CD4-positive, alpha-beta T cell (primary cell): ENCODE measurements at regions of chr9 and their contacts with region 1.

Region 1: GRCh38 chr9:100598641-100599145 is 20.8 kb downstream of the CAVIN4 start:
- DNase-seq: peak; percentile 66 to 91 (median 76)
- ATAC-seq: peak; percentile 84
- H3K4me3 ChIP-seq: peak overlapping the region; percentile 62
- H3K4me3 Mint-ChIP-seq: peak overlapping the region; percentile 81
- H3K27ac ChIP-seq: peak overlapping the region in 1 of 2 donors; percentile 45
- H3K27ac Mint-ChIP-seq: peak overlapping the region; percentile 63
- H3K4me1 ChIP-seq: peaks cover 18% of the 10 kb centered on the region
- H3K4me1 Mint-ChIP-seq: peaks cover 33% of the 10 kb centered on the region
- H3K27me3 ChIP-seq: no peaks in the 10 kb centered on the region
- H3K27me3 Mint-ChIP-seq: no peaks in the 10 kb centered on the region
- CTCF ChIP-seq: no peak

Region 2: GRCh38 chr9:98974994-98975712 is 1623.5 kb before region 1 on chr9:
- CTCF ChIA-PET with region 1: no interaction called
- POLR2A ChIA-PET with region 1: no interaction called
- intact Hi-C with region 1: loop called in 1 of 2 experiments (anchors 10 kb)
- DNase-seq: peak; percentile 58 to 87 (median 74)
- ATAC-seq: peak; percentile 99
- H3K4me3 ChIP-seq: peak overlapping the region; percentile 25
- H3K4me3 Mint-ChIP-seq: peak overlapping the region; percentile 28
- H3K27ac ChIP-seq: no peak overlapping the region
- H3K27ac Mint-ChIP-seq: no peak overlapping the region
- H3K4me1 ChIP-seq: peaks cover 9% of the 10 kb centered on the region
- H3K4me1 Mint-ChIP-seq: no peaks in the 10 kb centered on the region
- H3K27me3 ChIP-seq: peaks cover 0 to 6% of the 10 kb centered on the region in 2 experiments
- H3K27me3 Mint-ChIP-seq: peaks cover 10% of the 10 kb centered on the region
- CTCF ChIP-seq: peak; percentile 97

Region 3: DNA sequence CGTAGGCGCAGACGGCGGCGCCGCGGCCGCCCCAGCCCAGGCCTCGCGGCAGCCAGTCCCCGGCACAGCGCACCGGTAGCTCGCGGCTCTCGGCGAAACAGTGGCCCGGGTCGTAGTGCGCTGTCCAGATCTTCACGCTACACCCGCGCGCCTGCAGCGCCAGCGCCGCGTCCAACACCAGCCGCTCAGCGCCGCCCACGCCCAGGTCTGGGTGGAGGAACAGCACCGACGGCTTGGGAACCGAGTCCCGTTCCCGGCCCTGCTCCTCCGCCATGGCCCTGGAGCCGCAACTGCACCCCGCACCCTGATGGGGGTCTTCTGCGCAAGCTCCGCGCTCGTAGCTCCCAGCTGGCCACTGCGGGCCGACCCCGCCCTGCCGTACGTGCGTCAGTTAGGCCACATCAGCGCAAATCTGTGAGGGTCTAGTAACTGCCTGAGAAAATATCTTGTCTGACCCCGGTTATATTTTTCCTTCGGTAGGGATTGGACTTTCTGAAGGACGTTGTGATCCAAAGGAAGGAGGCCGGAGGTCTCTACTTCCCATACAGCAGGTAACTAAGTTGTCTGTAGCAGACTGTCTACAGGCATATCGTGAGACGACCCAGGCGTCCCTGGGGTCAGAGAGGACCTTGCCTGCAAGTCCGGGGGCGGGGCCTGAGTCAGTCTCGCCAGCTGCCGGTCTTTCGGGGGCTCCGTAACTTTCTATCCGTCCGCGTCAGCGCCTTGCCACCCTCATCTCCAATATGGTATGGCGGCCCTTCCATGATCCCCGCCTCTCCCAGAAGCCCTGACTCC is 1376.9 kb before region 1 on chr9 and contains the starts of genes ALG2 and SEC61B:
- CTCF ChIA-PET with region 1: no interaction called
- POLR2A ChIA-PET with region 1: no interaction called
- intact Hi-C with region 1: loop called in 1 of 2 experiments (anchors 5 kb)
- DNase-seq: peak; percentile 87 to 96 (median 90)
- ATAC-seq: peak; percentile 84
- H3K4me3 ChIP-seq: peak within 1 kb of the TSS; percentile 91
- H3K4me3 Mint-ChIP-seq: peak within 1 kb of the TSS; percentile 98
- H3K27ac ChIP-seq: peak within 1 kb of the TSS; percentile 89 to 95
- H3K27ac Mint-ChIP-seq: peak within 1 kb of the TSS; percentile 99
- H3K4me1 ChIP-seq: peaks cover 33% of the 10 kb centered on the region
- H3K4me1 Mint-ChIP-seq: peaks cover 81% of the 10 kb centered on the region
- H3K27me3 ChIP-seq: no peaks in the 10 kb centered on the region
- H3K27me3 Mint-ChIP-seq: no peaks in the 10 kb centered on the region
- CTCF ChIP-seq: no peak
- total RNA-seq, gene ALG2: 18.1 to 19.9 TPM
- total RNA-seq, gene SEC61B: 83.4 to 84.2 TPM

Region 4: DNA sequence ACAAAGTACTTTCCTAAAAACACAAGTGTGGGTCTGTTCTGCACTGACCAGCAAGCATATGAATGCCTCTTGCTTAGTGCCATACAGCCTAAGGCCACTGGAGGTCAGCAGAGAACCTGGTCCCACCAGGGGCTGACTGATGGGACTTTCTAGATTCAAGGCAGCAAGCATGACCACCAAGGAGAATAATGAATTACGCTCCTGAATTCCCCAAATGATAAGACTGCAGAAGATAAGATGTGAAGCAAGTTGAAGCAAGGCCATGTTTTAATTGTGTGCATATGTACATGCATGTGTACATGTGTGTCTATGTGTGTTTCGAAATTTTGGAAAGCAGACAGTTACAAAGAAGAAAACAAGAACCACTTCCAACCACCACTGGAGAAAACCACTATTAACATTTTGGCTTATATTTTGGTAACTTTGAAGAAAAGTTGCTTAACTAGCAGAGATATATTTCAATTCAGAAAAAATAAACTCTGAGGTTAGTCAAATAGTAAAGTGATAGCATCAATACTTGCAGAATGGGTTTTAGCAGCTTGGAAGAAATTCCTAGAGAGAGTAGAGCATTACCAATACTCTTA is 570.4 kb before region 1 on chr9:
- CTCF ChIA-PET with region 1: no interaction called
- POLR2A ChIA-PET with region 1: no interaction called
- intact Hi-C with region 1: loop called (anchors 2 to 5 kb)
- DNase-seq: peak; percentile 34 to 77 (median 54)
- ATAC-seq: peak; percentile 92
- H3K4me3 ChIP-seq: no peak overlapping the region
- H3K4me3 Mint-ChIP-seq: no peak overlapping the region
- H3K27ac ChIP-seq: no peak overlapping the region
- H3K27ac Mint-ChIP-seq: no peak overlapping the region
- H3K4me1 ChIP-seq: no peaks in the 10 kb centered on the region
- H3K4me1 Mint-ChIP-seq: peaks cover 5% of the 10 kb centered on the region
- H3K27me3 ChIP-seq: no peaks in the 10 kb centered on the region
- H3K27me3 Mint-ChIP-seq: no peaks in the 10 kb centered on the region
- CTCF ChIP-seq: peak; percentile 87

Region 5: DNA sequence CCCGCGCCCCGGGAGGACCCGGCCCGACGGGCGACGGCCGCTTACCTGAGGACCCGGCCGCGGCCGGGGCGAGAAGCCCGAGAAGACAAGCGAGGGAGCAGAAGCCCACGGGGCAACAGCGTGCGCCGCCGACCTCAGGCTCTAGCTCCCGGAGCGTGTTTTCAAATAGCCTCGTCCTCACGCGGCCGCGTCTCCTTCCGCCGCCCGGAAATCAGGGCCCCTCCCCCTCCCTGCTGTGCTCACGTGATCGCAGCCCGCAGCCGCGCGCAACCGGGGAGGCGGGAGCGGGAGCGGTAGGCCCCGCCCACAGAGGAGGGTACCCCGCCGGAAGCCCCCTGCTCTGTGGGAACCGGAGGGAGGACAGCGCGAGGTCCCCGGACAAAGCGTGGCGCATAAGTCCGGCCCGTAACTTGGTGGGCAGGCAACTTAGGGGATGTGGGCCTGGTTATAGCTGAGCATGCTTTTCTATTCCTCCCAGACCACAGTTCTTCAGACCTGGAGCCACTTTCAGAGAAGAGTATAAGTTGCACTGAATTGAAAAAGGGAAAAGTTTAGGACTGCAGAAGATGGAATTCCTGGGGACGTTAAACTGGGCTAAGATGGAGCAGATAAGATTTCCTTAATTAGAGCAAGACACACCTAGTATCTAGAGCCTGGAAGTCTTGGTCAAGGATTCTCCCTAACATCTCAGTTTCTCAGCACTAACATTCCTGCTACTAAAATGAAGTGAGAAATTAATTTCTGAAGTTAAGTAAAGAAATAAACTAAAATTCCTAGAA is 245.8 kb before region 1 on chr9 and contains the start of gene TEX10:
- CTCF ChIA-PET with region 1: no interaction called
- POLR2A ChIA-PET with region 1: no interaction called
- intact Hi-C with region 1: loop called in 1 of 2 experiments (anchors 10 kb)
- DNase-seq: peak; percentile 79 to 93 (median 85)
- ATAC-seq: peak; percentile 90
- H3K4me3 ChIP-seq: peak within 1 kb of the TSS; percentile 85
- H3K4me3 Mint-ChIP-seq: peak within 1 kb of the TSS; percentile 89
- H3K27ac ChIP-seq: peak within 1 kb of the TSS; percentile 58 to 60
- H3K27ac Mint-ChIP-seq: peak within 1 kb of the TSS; percentile 60
- H3K4me1 ChIP-seq: peaks cover 21% of the 10 kb centered on the region
- H3K4me1 Mint-ChIP-seq: peaks cover 53% of the 10 kb centered on the region
- H3K27me3 ChIP-seq: no peaks in the 10 kb centered on the region
- H3K27me3 Mint-ChIP-seq: no peaks in the 10 kb centered on the region
- CTCF ChIP-seq: no peak
- total RNA-seq, gene TEX10: 9.3 to 10.1 TPM

Region 6: DNA sequence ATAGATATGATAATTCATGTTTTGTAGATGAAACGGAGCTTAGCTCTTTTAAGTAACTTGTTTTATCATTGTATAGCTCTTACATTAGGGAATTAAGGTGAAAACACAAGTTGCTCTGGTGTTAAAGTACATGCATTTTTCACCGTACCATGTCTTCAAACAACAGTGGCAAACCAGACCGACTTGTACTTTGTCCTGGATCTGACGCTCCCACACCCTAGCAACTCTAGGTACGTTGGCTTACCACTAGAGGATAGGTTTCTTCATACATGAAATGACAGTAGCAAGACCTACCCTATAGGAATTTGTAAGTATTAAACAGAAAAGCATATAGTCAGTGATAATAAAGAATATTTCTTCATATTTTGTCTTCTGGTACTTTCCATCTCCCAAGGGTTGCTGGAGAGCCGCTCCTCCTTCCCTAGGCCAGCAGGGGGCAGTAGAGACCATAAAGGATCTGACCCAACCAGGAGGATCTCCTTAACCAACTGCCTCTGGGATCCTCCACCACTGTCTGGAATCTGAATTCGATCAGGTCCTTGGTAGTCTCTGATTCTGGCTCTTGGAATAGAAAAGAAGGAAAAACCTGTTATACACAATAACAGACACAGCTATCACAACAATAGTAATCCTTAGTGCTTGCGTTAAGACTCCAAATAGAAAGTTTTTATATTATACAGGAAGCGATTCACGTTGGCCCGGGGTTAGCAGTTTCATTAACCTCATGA is 115.8 kb after region 1 on chr9:
- CTCF ChIA-PET with region 1: no interaction called
- POLR2A ChIA-PET with region 1: no interaction called
- intact Hi-C with region 1: no loop called
- DNase-seq: peak in 7 of 14 experiments; percentile 3 to 40 (median 21)
- ATAC-seq: no peak
- H3K4me3 ChIP-seq: no peak overlapping the region
- H3K4me3 Mint-ChIP-seq: no peak overlapping the region
- H3K27ac ChIP-seq: no peak overlapping the region
- H3K27ac Mint-ChIP-seq: no peak overlapping the region
- H3K4me1 ChIP-seq: no peaks in the 10 kb centered on the region
- H3K4me1 Mint-ChIP-seq: no peaks in the 10 kb centered on the region
- H3K27me3 ChIP-seq: no peaks in the 10 kb centered on the region
- H3K27me3 Mint-ChIP-seq: peaks cover 11% of the 10 kb centered on the region
- CTCF ChIP-seq: peak; percentile 28

Region 7: GRCh38 chr9:101311758-101312420 is 713.2 kb after region 1 on chr9:
- CTCF ChIA-PET with region 1: no interaction called
- POLR2A ChIA-PET with region 1: no interaction called
- intact Hi-C with region 1: loop called (anchors 2 kb)
- DNase-seq: peak in 3 of 14 experiments; percentile 64 to 77 (median 76)
- ATAC-seq: peak; percentile 51
- H3K4me3 ChIP-seq: no peak overlapping the region
- H3K4me3 Mint-ChIP-seq: no peak overlapping the region
- H3K27ac ChIP-seq: no peak overlapping the region
- H3K27ac Mint-ChIP-seq: no peak overlapping the region
- H3K4me1 ChIP-seq: no peaks in the 10 kb centered on the region
- H3K4me1 Mint-ChIP-seq: no peaks in the 10 kb centered on the region
- H3K27me3 ChIP-seq: peaks cover 0 to 10% of the 10 kb centered on the region in 2 experiments
- H3K27me3 Mint-ChIP-seq: peaks cover 11% of the 10 kb centered on the region
- CTCF ChIP-seq: peak; percentile 81